Activated CD8-positive, alpha-beta memory T cell treated with anti-CD3 and anti-CD28 coated beads, Interleukin-2, amount 10 ng/mL, durations not matched to agents 7 days and 5 days (primary cell): ENCODE measurements at regions of chr7 and their contacts with region 1.

Region 1: GRCh38 chr7:27130540-27131389 is at the start of gene HOXA4:
- DNase-seq: peak; percentile 84
- ATAC-seq: peak; percentile 96
- H3K4me3 Mint-ChIP-seq: peak within 1 kb of the TSS; percentile 62
- H3K27ac Mint-ChIP-seq: no peak within 1 kb of the TSS
- H3K4me1 Mint-ChIP-seq: peaks cover 28% of the 10 kb centered on the region
- H3K27me3 Mint-ChIP-seq: peaks cover 79% of the 10 kb centered on the region
- total RNA-seq, gene HOXA4: not detected

Region 2: DNA sequence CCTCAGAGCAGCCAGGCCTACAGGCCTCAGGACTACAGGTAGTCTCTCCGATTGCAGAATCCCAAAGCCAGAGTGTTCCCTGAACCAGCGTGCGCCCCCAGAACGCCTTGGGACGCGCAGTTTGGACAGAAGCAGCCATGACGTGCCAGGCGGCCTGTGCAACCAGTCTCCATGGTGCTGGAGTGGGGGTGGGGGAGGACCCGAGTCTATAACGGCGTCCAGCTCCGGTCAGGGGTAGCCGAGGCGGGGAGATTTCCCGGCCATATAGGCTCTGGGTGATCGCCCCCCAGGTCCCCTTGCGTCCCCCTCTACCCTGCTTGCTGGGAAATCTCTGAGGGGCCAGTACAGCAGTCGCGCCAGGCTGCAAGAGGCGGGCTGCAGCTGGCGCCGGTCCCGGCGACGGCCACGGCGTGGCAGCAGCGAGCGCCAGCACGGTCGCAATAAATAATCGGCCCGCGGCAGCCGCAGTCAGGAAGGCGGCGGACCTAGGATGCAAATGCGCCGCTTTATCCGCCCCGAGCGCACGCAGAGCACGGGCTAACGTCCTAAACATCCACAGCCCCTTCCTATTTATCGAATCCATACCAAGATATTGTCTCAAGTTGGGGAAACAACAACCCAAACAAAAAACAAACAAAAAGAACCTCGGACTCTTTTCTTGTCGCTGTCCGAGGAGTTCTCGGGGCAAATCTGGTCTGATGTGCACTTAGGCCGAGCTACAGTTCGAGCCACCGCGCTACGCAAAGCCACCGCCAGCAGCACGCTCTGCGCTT is 20.0 kb after region 1 on chr7:
- CTCF ChIA-PET with region 1: interaction called, 18 read pairs
- DNase-seq: peak; percentile 70
- ATAC-seq: peak; percentile 85
- H3K4me3 Mint-ChIP-seq: peak overlapping the region; percentile 51
- H3K27ac Mint-ChIP-seq: no peak overlapping the region
- H3K4me1 Mint-ChIP-seq: peaks cover 29% of the 10 kb centered on the region
- H3K27me3 Mint-ChIP-seq: peaks cover 94% of the 10 kb centered on the region

Region 3: GRCh38 chr7:27697861-27698430 is 567.2 kb after region 1 on chr7:
- CTCF ChIA-PET with region 1: no interaction called
- DNase-seq: no peak
- ATAC-seq: peak; percentile 33
- H3K4me3 Mint-ChIP-seq: no peak overlapping the region
- H3K27ac Mint-ChIP-seq: peak overlapping the region; percentile 34
- H3K4me1 Mint-ChIP-seq: peaks cover 8% of the 10 kb centered on the region
- H3K27me3 Mint-ChIP-seq: peaks cover 6% of the 10 kb centered on the region